Activated CD4-positive, alpha-beta T cell treated with anti-CD3 and anti-CD28 coated beads, Interleukin-2, amount 10 ng/mL, durations not matched to agents 24 days and 14 days (primary cell): ENCODE measurements at regions of chr16 and their contacts with region 1.

Region 1: DNA sequence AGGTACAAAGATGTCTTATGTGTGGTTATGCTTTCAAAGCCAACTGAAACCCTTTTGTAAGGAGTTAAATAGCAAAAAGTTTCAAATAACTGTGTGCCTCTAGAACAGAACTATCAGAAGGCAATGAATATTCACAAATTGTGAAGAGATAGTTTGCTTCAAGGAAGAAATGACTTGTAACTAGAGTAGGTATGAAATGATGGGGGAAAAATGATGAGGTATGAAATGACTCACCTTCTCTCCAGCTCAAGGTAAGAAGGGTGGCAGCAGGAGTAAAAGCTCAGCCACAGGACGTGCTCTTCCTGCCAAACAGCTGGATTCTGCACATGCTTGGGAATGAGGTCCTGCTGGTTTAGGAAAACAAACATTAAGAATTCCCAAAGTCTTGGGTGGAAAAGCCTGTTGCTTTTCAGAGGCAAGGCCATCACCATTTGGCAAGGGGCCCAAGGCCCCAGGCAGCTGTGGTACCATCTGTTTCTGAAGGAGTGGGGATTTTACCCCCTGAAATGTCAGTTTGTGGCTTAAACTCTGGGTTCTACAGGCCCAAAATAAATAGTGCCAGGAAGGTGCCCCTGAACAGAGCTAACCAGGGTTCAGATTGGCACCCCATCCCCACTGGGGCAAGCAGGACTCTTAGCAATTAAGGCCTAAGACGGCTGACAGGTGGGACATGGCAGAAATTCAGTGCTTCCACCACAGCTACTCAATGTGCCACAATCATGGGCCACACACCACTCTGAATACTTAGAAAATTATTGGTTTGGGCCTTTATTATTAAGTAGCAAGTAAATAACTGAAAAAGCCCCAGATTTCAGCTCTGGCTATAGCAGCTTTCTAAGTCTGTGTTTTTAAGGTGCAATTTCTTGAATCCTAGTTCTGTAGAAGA is 13.3 kb downstream of the HERPUD1 start:
- DNase-seq: no peak
- H3K4me3 Mint-ChIP-seq: peak overlapping the region; percentile 23
- H3K27ac Mint-ChIP-seq: peak overlapping the region; percentile 92
- H3K4me1 Mint-ChIP-seq: peaks cover 39% of the 10 kb centered on the region
- H3K27me3 Mint-ChIP-seq: no peaks in the 10 kb centered on the region

Region 2: DNA sequence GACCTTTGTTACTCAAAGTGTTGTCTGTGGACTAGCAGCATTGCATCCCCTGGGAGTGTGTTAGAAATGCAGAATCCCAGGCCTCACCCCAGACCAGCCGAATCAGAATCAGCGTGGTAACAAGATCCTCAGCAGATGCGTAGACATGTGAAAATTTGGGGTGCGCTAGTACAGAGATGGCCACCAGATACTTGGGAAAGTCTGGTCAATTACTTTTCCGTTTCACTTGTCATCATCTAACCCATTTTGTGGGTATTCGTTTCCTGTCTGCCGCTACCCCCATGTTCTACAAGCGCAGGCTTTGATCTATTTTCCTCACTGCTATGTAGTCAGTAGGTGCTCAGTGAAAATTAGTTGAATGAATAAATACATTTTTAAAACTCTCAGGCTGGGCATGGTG is 46.4 kb before region 1 on chr16:
- intact Hi-C with region 1: no loop called
- DNase-seq: no peak
- H3K4me3 Mint-ChIP-seq: no peak overlapping the region
- H3K27ac Mint-ChIP-seq: no peak overlapping the region
- H3K4me1 Mint-ChIP-seq: peaks cover 14% of the 10 kb centered on the region
- H3K27me3 Mint-ChIP-seq: peaks cover 20% of the 10 kb centered on the region

Region 3: GRCh38 chr16:56916571-56917403 is 28.4 kb before region 1 on chr16:
- intact Hi-C with region 1: loop called (anchors 1 kb)
- DNase-seq: peak; percentile 87
- H3K4me3 Mint-ChIP-seq: peak overlapping the region; percentile 67
- H3K27ac Mint-ChIP-seq: peak overlapping the region; percentile 87
- H3K4me1 Mint-ChIP-seq: peaks cover 47% of the 10 kb centered on the region
- H3K27me3 Mint-ChIP-seq: peaks cover 4% of the 10 kb centered on the region